Astrocyte of the cerebellum (primary cell): ENCODE measurements at regions of chr17 and their contacts with region 1.

Region 1: GRCh38 chr17:4407851-4408250 is 25.9 kb upstream of the SPNS3 start:
- DNase-seq: no peak
- H3K4me3 ChIP-seq: no peak overlapping the region
- CTCF ChIP-seq: no peak

Region 2: DNA sequence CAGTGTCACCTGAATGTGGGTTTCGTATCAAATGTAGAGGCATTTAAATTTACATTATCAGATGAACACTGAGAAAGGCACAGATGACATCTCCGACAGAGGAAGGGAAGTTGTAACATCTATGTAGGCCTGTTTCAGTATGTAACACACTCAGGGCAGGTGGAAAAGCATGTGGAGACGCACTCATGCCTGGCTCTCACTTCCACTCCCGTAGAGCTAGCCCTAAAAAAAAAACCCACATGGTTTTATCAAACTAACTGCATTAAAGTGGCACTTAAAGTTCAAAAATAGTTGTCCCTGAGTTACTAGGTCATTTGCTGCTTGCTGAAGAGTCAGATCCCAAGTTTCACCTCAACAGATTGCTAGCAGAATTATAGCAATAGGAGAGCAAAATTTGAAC is 137.9 kb before region 1 on chr17:
- in situ Hi-C with region 1: loop called (anchors 5 kb)
- DNase-seq: no peak
- H3K4me3 ChIP-seq: no peak overlapping the region
- CTCF ChIP-seq: no peak